Activated naive CD4-positive, alpha-beta T cell treated with anti-CD3 and anti-CD28 coated beads for 36 hours (primary cell): ENCODE measurements at regions of chr2 and their contacts with region 1.

Region 1: GRCh38 chr2:62787386-62787785 is 81.9 kb downstream of the EHBP1 start:
- DNase-seq: no peak
- H3K4me3 Mint-ChIP-seq: no peak overlapping the region
- H3K27ac Mint-ChIP-seq: no peak overlapping the region
- H3K4me1 Mint-ChIP-seq: peaks cover 15% of the 10 kb centered on the region
- H3K27me3 Mint-ChIP-seq: no peaks in the 10 kb centered on the region

Region 2: DNA sequence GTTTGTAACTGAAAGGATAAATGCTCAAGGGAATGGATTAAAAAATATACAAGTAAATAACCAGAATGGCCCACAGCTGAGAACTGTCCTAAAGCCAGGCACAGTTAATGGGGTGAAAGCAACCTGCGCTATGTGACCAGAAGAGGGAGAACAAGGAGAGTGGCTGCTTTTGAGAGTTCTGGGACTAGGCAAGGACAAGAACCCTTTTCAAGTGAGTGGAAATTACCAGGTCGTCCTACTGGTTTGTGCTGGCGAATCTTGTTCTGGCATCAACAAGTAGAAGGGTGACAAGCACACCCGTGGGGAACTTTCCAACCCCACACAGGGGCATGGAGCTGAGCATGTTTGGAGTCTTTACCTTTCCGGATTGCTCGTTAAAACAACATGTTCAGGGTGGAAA is 364.2 kb before region 1 on chr2:
- CTCF ChIA-PET with region 1: no interaction called
- intact Hi-C with region 1: no loop called
- DNase-seq: no peak
- H3K4me3 Mint-ChIP-seq: no peak overlapping the region
- H3K27ac Mint-ChIP-seq: no peak overlapping the region
- H3K4me1 Mint-ChIP-seq: no peaks in the 10 kb centered on the region
- H3K27me3 Mint-ChIP-seq: no peaks in the 10 kb centered on the region

Region 3: DNA sequence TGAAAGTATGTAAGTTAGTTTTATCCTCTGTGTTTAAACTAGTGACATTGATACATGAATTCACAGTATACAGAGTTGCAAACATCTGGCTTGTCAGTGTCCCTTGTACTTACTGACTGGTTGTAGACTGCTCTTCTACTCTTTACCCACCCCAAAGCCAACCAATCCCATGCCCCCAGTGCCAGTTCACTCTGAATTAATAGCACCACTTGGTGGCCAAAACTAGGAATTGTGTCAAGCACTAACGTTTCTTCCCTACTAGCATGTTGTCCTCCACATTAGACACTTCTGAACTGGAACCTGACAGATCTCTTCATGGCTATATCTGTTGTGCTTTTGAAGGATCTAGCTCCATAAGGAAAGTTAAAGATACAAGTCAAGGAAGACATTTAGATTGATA is 236.1 kb after region 1 on chr2:
- CTCF ChIA-PET with region 1: no interaction called
- intact Hi-C with region 1: loop called (anchors 1 kb)
- DNase-seq: no peak
- H3K4me3 Mint-ChIP-seq: no peak overlapping the region
- H3K27ac Mint-ChIP-seq: no peak overlapping the region
- H3K4me1 Mint-ChIP-seq: no peaks in the 10 kb centered on the region
- H3K27me3 Mint-ChIP-seq: no peaks in the 10 kb centered on the region

Region 4: GRCh38 chr2:63050334-63051041 is 263.1 kb after region 1 on chr2 and contains the start of gene OTX1:
- CTCF ChIA-PET with region 1: no interaction called
- intact Hi-C with region 1: loop called (anchors 1 kb)
- DNase-seq: peak; percentile 55
- H3K4me3 Mint-ChIP-seq: peak within 1 kb of the TSS; percentile 80
- H3K27ac Mint-ChIP-seq: no peak within 1 kb of the TSS
- H3K4me1 Mint-ChIP-seq: peaks cover 61% of the 10 kb centered on the region
- H3K27me3 Mint-ChIP-seq: peaks cover 79% of the 10 kb centered on the region
- total RNA-seq, gene OTX1: not detected

Region 5: DNA sequence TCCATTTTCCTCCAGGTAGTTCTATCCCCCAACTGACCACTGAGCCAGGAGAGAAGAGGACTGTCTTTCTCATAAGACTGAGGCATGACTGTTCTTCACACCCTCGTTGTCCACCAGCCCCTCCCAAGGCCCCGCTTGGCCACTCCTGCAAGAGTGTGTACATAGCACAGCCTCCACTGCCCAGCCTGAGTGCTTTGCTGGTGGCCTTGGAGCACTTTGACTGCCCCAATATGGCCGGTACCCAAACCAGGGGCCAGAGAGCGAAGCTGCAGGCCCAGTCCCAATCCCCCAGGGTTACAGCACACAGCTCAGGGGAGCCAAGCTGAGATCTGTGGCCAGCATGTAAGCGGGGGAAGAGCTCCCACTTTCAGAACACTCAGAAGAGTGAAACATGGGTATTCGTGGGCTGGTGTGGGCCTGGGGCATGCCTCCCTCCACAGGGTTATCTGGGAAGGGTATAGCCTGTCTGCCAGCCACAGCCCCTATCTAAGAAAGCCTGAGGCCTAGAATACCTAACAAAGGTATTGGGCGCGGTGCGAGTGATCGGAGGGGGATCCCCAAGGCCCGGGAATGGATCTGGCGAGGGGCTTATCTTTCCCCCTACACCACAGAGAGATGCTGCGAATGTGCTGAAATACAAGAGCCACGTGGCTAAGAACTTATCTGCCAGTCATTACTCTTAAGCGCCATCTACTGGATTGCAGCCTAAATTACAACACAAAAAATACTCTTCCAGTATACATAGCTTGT is 637.1 kb after region 1 on chr2:
- CTCF ChIA-PET with region 1: interaction called, 4 read pairs
- intact Hi-C with region 1: loop called (anchors 1 kb)
- DNase-seq: no peak
- H3K4me3 Mint-ChIP-seq: no peak overlapping the region
- H3K27ac Mint-ChIP-seq: no peak overlapping the region
- H3K4me1 Mint-ChIP-seq: peaks cover 2% of the 10 kb centered on the region
- H3K27me3 Mint-ChIP-seq: no peaks in the 10 kb centered on the region

Region 6: DNA sequence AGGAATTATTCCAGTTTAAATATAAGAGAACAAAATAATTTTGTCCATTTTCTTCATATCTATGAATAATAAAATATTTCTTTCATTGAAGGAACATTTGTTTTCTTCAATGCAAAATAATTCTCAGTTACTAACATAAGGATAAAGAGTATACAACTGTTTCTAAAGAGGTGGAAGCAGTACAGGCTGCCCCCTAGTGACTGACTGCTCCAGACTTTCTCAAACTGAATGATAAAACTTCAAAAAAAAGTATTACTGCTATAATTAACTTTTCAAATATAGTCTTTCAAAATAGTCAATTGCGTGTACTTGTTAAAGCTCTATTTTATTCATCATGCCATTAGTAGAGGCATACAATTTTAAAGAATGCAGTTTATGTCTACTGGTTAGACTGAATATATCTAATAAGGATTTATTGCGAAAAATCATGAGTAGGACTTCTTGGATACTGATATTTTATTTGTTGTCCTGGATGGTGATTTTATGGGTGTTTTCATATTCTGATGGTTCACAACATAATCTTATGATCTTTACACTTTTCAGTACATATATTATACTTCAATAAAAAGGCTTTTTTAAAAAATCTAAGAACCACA is 700.8 kb after region 1 on chr2:
- CTCF ChIA-PET with region 1: no interaction called
- intact Hi-C with region 1: loop called (anchors 2 kb)
- DNase-seq: peak; percentile 28
- H3K4me3 Mint-ChIP-seq: no peak overlapping the region
- H3K27ac Mint-ChIP-seq: no peak overlapping the region
- H3K4me1 Mint-ChIP-seq: no peaks in the 10 kb centered on the region
- H3K27me3 Mint-ChIP-seq: no peaks in the 10 kb centered on the region

Region 7: DNA sequence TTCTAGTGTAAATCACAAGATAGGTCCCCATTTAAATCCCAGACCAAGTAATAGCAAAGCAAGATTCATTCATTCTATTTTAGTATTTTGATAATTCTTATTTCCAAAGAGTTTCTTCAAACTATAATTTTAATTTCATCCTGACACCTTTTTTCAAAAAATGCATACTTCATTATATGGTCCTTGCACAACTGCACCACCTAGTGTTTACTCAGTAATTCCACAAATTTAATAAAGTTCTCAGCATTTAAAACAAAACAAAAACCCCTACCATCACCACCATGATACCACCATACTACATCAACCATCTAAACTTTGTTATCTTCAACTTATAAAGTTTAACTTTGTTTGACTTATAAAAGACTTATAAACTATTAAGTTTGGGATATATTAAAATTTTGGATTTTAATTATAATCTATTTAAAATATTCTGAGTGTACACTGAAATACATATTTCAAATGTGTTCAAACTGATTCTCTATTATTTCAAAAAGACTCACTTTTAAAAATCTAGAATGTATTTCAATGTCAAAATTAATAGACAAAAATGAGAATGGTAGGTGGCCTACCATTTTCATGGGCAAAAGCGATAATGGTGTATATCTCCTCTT is 756.7 kb after region 1 on chr2:
- CTCF ChIA-PET with region 1: no interaction called
- intact Hi-C with region 1: loop called (anchors 2 kb)
- DNase-seq: no peak
- H3K4me3 Mint-ChIP-seq: no peak overlapping the region
- H3K27ac Mint-ChIP-seq: no peak overlapping the region
- H3K4me1 Mint-ChIP-seq: no peaks in the 10 kb centered on the region
- H3K27me3 Mint-ChIP-seq: no peaks in the 10 kb centered on the region

Region 8: DNA sequence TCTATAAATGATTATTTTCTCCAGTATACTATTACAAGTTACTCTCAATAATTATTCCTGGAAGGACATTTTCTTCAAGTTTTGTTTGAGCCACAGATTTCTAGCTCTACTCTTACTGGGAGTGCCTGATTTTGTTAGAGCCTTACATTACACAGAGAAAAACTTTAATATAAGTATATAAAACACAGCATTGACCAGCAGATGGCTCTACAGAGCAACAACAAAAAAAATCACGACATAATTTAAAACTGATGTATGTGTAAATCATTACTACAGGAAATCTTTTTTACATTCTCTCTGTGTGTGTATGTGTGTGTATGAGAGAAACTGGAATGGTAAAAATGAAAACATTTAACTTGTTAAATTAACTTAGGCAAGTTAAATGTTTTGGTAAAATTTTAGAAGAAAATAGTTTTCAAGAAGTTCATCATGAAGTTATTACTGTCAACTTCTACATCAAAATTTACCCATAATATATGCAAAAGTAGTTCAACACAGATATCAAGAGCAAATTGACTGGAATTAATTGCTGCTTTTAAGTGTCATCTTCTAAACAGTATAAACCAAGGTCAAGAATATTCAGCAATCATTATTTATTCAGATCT is 904.7 kb after region 1 on chr2:
- CTCF ChIA-PET with region 1: no interaction called
- intact Hi-C with region 1: loop called (anchors 5 kb)
- DNase-seq: peak; percentile 40
- H3K4me3 Mint-ChIP-seq: no peak overlapping the region
- H3K27ac Mint-ChIP-seq: no peak overlapping the region
- H3K4me1 Mint-ChIP-seq: no peaks in the 10 kb centered on the region
- H3K27me3 Mint-ChIP-seq: no peaks in the 10 kb centered on the region